ENCODE measurements at regions of chr2 and their contacts with region 1.

Region 1: GRCh38 chr2:72770879-72771461 is 54.9 kb downstream of the EXOC6B start:
- DNase-seq: peak; percentile 45
- H3K4me3 Mint-ChIP-seq: no peak overlapping the region
- H3K27ac Mint-ChIP-seq: no peak overlapping the region
- H3K4me1 Mint-ChIP-seq: no peaks in the 10 kb centered on the region
- H3K27me3 Mint-ChIP-seq: no peaks in the 10 kb centered on the region

Region 2: DNA sequence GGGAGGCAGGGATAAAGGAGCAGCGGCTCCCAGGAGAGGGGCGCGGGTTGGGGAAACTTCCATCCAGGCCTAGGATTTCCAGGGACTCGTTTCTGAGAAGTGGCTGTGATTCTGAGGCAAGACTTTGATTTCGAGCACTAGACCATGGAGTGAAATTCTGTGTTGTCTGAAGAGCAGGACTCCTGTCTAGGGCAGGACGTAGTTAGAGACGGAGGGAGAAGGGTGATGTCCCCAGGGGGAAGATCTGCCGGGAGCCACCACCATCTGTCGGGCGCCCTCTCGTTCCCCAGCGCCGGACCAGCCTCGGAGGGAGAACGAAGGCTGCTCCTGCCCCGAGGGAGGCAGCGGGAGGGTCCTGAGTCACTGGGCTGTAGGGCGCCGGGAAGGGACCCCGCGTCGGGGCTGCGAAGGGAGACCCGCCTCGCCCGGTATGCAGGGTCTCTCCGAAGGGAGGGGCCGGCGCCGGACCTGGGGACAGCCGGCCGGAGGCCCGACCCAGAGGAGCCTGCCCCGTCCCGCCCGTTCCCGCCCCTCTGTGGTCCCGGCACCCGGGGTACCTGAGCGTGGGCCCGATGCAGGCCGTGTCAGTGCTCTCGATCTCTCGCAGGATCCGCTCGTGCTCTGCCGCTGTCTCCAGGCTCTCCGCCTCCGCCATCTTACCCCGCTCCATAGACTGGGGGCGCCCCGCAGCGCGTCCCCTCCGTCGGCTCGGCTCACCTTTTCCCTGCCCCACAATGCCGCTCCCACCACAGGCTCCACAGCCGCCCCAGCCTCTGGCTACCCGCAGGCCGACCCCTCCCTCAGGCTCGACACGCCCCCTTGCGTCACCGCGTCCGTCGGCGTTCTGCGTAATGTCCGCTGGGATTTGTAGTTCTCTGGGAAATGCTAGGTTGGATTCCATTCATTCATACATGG is 54.5 kb after region 1 on chr2 and contains the start of gene EXOC6B:
- intact Hi-C with region 1: loop called (anchors 2 kb)
- DNase-seq: peak; percentile 79
- H3K4me3 Mint-ChIP-seq: peak within 1 kb of the TSS; percentile 93
- H3K27ac Mint-ChIP-seq: peak within 1 kb of the TSS; percentile 69
- H3K4me1 Mint-ChIP-seq: peaks cover 43% of the 10 kb centered on the region
- H3K27me3 Mint-ChIP-seq: peaks cover 5% of the 10 kb centered on the region
- total RNA-seq, gene EXOC6B: 6.8 and 7.7 TPM in 2 replicates

Region 3: DNA sequence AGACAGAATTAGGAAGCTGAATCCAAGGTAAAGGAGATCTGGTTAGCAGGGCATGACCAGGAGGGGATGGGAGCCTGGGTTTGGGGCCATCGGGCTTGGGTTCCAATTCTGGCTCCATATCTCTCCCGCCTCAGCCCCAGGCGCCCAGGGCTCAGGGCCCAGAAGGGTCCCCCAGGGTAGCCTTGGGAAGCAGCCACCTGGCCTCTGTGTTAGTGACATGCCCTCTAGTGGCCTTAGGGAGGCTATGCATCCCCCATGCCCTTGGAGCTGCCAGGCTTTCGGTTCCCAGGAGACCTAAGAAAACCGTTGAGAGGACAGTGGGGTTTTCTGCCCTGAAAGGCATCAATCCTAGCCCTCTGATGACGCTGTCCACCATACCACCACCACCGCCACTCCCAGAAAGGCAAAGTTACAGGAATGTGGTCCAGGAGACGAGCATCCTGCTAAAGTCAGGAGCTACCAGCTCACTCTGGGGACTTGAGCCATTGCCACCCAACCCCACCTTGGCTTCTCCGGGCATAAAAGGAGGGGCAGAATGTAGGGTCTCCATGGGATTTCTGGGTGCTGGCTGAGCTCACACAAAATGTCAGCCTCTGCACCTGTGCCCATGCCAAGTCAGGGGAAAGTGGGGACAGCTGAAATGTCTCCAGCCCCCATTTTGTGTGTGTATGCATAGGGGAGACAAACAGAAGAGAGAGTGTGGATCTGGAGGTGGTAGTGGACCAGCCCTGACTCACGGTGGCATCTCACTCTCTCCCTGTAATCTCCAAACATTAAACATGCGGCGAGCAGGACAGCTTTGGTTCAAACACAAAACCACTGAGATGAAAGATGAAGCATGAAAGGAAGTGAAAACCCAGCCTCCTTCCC is 202.8 kb after region 1 on chr2:
- intact Hi-C with region 1: loop called (anchors 2 kb)
- DNase-seq: peak; percentile 17
- H3K4me3 Mint-ChIP-seq: no peak overlapping the region
- H3K27ac Mint-ChIP-seq: no peak overlapping the region
- H3K4me1 Mint-ChIP-seq: no peaks in the 10 kb centered on the region
- H3K27me3 Mint-ChIP-seq: peaks cover 2% of the 10 kb centered on the region